ENCODE measurements at regions of chr17 and their contacts with region 1.

Region 1: GRCh38 chr17:15502369-15503112 is 35.1 kb upstream of the CDRT4 start:
- DNase-seq: peak; percentile 60 to 78 (median 67)
- ATAC-seq: peak; percentile 97
- H3K4me3 ChIP-seq: no peak overlapping the region
- H3K27ac ChIP-seq: no peak overlapping the region
- H3K4me1 ChIP-seq: peaks cover 1 to 10% of the 10 kb centered on the region in 2 experiments; a peak in 4 of 5 replicates
- H3K27me3 ChIP-seq: no peaks in the 10 kb centered on the region
- CTCF ChIP-seq: peak; percentile 76 to 78 (median 78)
- EP300 ChIP-seq: no peak
- POLR2A ChIP-seq: no peak
- RAD21 ChIP-seq: peak; percentile 84

Region 2: GRCh38 chr17:15469260-15469659 is 33.3 kb before region 1 on chr17:
- CTCF ChIA-PET with region 1: no interaction called
- POLR2A ChIA-PET with region 1: interaction called, 3 read pairs
- in situ Hi-C with region 1: loop called (anchors 5 kb)
- intact Hi-C with region 1: no loop called
- DNase-seq: no peak
- ATAC-seq: no peak
- H3K4me3 ChIP-seq: no peak overlapping the region
- H3K27ac ChIP-seq: no peak overlapping the region
- H3K4me1 ChIP-seq: no peaks in the 10 kb centered on the region; a peak in 2 of 5 replicates
- H3K27me3 ChIP-seq: no peaks in the 10 kb centered on the region
- CTCF ChIP-seq: no peak
- EP300 ChIP-seq: no peak
- POLR2A ChIP-seq: no peak
- RAD21 ChIP-seq: no peak

Measured in K562 (cell line).